ENCODE measurements at regions of chr2 and their contacts with region 1.

Region 1: DNA sequence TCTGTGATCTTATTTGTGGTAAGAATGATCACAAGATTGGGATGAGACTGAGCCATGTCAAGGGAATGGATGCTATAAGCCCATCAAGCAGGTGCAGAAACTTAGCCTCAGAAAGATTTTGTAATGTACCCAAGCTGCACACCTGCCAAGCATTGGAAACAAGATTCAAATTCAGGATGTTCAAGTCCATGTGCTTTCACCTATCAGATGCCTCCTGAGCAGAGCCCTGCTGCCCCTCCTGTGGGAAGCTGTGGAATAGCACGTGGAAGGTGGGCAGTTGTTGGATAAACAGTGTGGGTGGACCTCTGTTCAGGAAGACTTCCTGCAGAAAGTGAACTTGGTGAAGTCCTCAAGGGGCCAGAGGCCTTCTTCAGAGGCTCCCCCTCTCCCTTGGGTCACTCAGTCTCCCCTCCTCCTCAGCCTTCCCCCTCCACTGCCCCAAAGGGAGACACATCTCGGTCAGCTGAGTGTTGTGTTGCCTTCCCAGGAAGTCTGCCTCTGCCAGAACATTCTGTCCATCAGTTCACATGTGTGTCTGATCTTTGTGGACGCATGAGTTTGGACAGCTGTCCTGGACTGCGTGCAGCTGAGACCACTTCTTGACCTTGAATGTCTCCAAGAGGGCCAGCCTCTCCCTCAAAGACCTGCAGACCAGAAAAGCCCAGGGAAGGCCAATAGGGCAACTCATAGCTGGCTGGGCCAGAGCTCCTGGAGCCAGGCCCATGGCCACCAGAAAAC is 186.1 kb downstream of the INHBB start:
- DNase-seq: no peak
- H3K4me3 ChIP-seq: no peak overlapping the region
- H3K27ac ChIP-seq: peak overlapping the region in 1 of 2 donors; percentile 44
- H3K4me1 ChIP-seq: no peaks in the 10 kb centered on the region
- H3K27me3 ChIP-seq: no peaks in the 10 kb centered on the region
- CTCF ChIP-seq: no peak
- POLR2A ChIP-seq: no peak

Region 2: GRCh38 chr2:120632796-120633646 is 101.0 kb after region 1 on chr2:
- intact Hi-C with region 1: no loop called
- DNase-seq: no peak
- H3K4me3 ChIP-seq: no peak overlapping the region
- H3K27ac ChIP-seq: peak overlapping the region; percentile 22 to 80
- H3K4me1 ChIP-seq: peaks cover 0 to 4% of the 10 kb centered on the region in 2 donors
- H3K27me3 ChIP-seq: no peaks in the 10 kb centered on the region
- CTCF ChIP-seq: no peak
- POLR2A ChIP-seq: no peak

Region 3: DNA sequence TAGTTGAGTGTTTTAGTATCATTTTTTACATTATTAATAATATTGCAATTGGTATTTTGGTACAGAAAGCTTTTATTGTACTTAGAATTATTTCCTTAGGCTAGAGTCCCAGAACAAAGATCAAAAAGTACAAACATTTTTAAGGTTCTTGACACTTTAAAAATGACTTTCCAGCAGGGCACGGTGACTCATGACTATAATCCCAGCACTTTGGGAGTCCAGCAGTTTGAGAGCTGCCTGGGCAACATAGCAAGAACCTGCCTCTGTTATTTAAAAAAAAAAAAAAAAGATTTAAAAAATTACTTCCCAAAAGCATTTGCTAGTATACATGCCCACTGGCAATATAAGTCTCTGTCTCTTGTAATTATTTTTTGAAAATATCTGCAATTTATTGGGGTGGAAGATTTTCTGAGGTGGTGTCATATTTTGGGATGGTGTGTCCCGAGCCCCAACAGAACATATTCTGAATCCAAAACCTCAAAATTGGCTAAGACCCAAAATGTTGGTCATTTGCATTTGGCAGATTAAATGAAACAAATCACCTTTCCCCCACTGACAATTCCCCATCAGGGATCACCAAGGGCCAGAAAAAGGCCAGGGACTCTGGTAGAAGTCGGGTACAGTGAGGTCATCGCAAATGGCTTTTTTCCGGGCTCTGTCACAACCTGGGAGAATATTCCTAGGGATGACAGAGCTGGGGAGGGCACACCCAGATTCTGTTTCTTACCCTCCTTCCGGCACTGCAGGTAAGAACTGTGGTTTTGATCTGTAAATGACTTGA is 1162.6 kb after region 1 on chr2:
- intact Hi-C with region 1: loop called (anchors 5 kb)
- DNase-seq: no peak
- H3K4me3 ChIP-seq: no peak overlapping the region
- H3K27ac ChIP-seq: no peak overlapping the region
- H3K4me1 ChIP-seq: no peaks in the 10 kb centered on the region
- H3K27me3 ChIP-seq: no peaks in the 10 kb centered on the region
- CTCF ChIP-seq: no peak
- POLR2A ChIP-seq: no peak